Activated CD4-positive, alpha-beta T cell treated with anti-CD3 and anti-CD28 coated beads, Interleukin-2, amount 10 ng/mL, durations not matched to agents 24 days and 14 days (primary cell): ENCODE measurements at regions of chr9 and their contacts with region 1.

Region 1: DNA sequence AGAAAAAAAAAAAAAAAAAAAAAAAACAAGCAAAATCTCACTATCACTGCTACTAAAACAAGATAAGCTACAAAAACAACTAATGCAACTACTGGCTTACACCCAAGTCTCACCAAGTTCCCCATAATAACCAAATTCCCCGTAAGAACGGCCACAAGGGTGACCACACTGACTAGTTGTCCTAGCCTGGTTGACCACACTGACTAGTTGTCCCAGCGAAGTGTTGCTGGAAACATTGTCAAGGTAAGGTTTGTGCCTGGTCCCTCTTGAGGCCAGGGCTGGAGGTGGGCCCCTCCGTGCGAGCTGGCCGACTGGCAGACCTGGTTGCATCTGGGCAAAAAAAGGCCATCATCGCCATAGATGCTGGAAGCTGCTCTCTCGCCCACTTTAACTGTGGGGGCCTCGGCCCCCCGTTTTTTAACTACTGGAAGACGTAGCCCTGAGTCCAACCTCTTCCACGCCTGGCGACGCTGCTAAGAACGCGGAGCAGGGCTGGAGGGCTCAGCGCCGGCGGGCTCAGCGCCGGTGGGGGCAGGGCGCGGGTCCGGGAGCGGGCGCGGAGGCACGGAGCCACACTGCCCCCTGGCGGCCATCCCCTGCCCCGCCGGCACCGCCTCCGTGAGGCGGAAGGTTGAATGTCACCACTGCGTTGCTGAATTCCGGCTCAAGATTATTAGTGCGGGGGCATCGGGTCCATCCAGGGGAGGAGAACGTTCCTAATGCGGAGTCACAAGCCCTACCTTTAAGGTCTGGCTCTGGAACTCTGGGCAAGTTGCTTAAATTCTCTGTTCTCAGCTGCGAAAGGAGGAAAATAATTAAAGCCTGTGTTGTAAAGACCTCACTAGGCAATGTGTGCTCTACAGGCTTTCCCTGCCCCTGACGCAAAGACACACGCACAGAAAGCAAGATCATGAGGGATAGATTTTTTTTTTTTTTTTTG is 84.0 kb downstream of the HSD17B3 start:
- DNase-seq: peak; percentile 94
- H3K4me3 Mint-ChIP-seq: peak overlapping the region; percentile 83
- H3K27ac Mint-ChIP-seq: peak overlapping the region; percentile 53
- H3K4me1 Mint-ChIP-seq: peaks cover 8% of the 10 kb centered on the region
- H3K27me3 Mint-ChIP-seq: peaks cover 51% of the 10 kb centered on the region

Region 2: DNA sequence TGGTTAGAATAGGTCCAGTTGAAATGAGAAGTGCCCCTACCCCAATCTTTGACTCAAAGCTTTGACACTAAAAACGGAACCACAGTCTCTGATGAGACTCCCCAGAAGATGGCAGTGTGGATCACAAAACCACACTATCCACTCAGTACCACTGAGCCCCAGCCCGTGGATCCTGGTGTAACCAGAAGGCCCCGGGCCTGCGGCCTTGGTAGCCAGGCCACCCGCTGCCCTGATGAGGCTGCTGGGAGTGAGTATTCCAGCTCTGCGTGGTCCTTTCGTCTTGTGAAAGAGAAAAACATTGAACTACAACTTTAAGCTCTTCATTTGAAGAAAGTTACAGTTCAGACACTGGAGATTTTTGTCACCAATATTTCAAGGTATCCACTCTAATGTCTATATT is 1536.5 kb before region 1 on chr9:
- intact Hi-C with region 1: loop called (anchors 2 kb)
- DNase-seq: peak; percentile 86
- H3K4me3 Mint-ChIP-seq: no peak overlapping the region
- H3K27ac Mint-ChIP-seq: no peak overlapping the region
- H3K4me1 Mint-ChIP-seq: peaks cover 5% of the 10 kb centered on the region
- H3K27me3 Mint-ChIP-seq: peaks cover 41% of the 10 kb centered on the region

Region 3: GRCh38 chr9:95127249-95128176 is 1090.5 kb before region 1 on chr9:
- intact Hi-C with region 1: loop called (anchors 5 kb)
- DNase-seq: peak; percentile 92
- H3K4me3 Mint-ChIP-seq: no peak overlapping the region
- H3K27ac Mint-ChIP-seq: no peak overlapping the region
- H3K4me1 Mint-ChIP-seq: peaks cover 4% of the 10 kb centered on the region
- H3K27me3 Mint-ChIP-seq: no peaks in the 10 kb centered on the region

Region 4: DNA sequence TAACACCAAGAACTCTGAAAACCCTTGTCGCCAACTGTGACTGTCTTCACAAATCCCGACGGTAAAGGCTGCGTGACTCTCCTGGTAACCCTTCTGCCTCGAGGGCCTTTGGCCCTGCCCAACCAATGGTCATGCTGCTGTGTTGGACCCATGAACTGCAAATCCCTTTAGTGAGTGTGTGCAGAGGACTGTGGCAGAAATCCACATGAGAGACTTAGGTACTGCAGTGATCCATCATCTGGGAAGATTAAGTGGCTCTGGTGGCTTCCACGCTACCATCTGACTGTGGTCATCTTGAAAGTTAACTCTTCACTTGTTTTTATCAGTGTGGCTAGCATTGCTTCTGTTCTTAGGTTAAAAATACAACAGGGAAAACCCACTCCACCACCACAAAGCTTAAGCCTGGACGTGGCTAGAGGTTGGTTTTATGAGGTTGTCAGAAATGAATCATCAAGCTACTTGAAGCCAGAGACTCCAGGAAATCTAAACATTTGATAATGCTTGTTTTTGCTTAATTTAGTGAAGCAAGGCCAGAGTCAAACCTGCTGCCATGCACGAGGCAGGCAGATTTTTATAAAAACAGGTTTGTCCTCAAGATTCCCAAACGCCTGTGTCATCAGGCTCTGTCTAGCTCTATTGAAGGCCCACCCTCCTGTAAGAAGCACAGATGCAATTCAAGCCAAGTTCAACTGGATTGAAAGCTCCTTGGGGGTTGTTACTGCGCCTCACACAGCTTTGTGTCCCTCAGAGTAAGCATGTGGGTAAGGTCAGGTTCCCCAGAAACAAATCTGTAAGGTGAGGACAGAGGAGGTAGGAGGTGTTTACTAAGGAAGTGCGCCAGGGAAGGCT is 395.2 kb before region 1 on chr9:
- intact Hi-C with region 1: loop called (anchors 1 kb)
- DNase-seq: peak; percentile 83
- H3K4me3 Mint-ChIP-seq: peak overlapping the region; percentile 53
- H3K27ac Mint-ChIP-seq: peak overlapping the region; percentile 72
- H3K4me1 Mint-ChIP-seq: peaks cover 34% of the 10 kb centered on the region
- H3K27me3 Mint-ChIP-seq: peaks cover 39% of the 10 kb centered on the region

Region 5: DNA sequence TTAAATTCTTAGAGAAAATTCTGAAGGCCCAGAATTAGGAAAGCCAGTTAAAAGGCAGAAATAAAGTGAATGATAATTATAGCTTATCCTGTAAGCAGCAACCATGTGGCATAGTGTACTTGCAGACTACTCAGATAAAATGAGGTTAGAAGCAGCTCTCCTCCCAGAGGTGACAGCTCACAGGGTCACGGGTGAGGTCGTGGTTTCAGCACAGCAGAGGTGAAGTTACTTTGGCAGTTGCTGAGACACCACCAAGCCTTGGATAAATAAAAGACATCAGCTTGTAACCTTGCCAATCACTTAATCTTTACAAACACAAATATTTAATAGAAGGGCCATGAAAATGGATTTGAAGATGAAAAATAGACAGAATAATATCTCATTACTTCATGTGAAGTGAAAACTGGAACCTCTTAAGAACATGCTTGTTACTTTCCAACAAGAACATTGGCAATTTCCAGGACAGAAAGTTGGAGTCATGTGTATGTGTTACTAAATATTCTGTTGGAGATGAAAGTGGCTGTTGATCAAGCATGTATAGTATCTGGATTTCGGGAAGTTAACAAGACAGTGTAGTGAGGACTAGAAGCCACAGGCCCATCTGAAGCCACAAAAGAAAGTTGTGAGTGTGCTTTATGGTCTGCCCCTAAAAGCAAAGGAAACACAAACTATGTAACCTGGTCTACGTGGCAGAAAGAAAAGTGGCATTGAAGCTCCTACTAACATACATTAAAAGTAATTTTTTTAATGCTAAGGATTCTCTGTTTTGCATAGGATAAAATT is 208.1 kb before region 1 on chr9:
- intact Hi-C with region 1: loop called (anchors 10 kb)
- DNase-seq: peak; percentile 93
- H3K4me3 Mint-ChIP-seq: peak overlapping the region; percentile 52
- H3K27ac Mint-ChIP-seq: peak overlapping the region; percentile 96
- H3K4me1 Mint-ChIP-seq: peaks cover 51% of the 10 kb centered on the region
- H3K27me3 Mint-ChIP-seq: no peaks in the 10 kb centered on the region

Region 6: DNA sequence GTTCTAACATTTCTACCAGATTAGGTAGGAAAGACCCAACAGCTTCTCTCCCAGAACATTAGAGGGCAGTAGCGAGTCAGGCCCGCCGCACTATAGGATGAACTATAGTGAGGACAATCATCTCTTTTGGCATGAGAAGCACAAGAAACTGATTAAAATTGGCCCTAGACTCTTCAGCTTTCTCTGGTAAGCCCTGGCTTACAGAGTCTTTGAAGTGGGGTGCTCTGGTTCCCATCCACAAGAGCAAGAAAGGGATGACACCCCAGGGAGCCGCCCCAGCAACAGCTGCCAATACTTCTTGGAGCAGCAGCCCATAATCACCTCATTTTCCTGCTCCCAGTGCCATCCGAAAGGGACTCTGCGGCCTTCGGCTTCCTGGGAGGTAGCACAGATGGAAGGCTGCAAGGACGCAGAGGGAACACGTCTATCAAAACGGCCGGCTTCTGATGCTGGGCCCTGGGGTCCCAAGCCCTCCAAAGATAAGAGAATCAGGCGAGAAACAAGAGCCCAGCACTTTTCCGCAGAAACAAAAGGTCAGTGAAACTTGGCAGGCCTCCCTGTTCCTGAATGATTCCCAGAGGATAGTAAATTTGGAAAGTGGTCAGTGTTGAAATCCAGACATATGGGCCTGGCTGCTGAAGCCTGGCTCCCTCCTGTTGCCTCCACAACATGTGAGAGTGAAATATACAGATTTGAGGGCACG is 14.7 kb after region 1 on chr9:
- intact Hi-C with region 1: no loop called
- DNase-seq: peak; percentile 76
- H3K4me3 Mint-ChIP-seq: no peak overlapping the region
- H3K27ac Mint-ChIP-seq: no peak overlapping the region
- H3K4me1 Mint-ChIP-seq: peaks cover 2% of the 10 kb centered on the region
- H3K27me3 Mint-ChIP-seq: peaks cover 47% of the 10 kb centered on the region

Region 7: GRCh38 chr9:96581786-96582185 is 363.8 kb after region 1 on chr9:
- intact Hi-C with region 1: no loop called
- DNase-seq: no peak
- H3K4me3 Mint-ChIP-seq: no peak overlapping the region
- H3K27ac Mint-ChIP-seq: no peak overlapping the region
- H3K4me1 Mint-ChIP-seq: no peaks in the 10 kb centered on the region
- H3K27me3 Mint-ChIP-seq: peaks cover 8% of the 10 kb centered on the region